ENCODE measurements at regions of chr11 and their contacts with region 1.

Region 1: GRCh38 chr11:35683728-35684339 is 21.3 kb downstream of the TRIM44 start:
- H3K4me3 Mint-ChIP-seq: no peak overlapping the region
- H3K27ac Mint-ChIP-seq: no peak overlapping the region
- H3K4me1 Mint-ChIP-seq: peaks cover 24% of the 10 kb centered on the region
- H3K27me3 Mint-ChIP-seq: no peaks in the 10 kb centered on the region

Region 2: GRCh38 chr11:35629914-35630313 is 53.9 kb before region 1 on chr11:
- intact Hi-C with region 1: no loop called
- H3K4me3 Mint-ChIP-seq: no peak overlapping the region
- H3K27ac Mint-ChIP-seq: no peak overlapping the region
- H3K4me1 Mint-ChIP-seq: no peaks in the 10 kb centered on the region
- H3K27me3 Mint-ChIP-seq: peaks cover 55% of the 10 kb centered on the region

Region 3: DNA sequence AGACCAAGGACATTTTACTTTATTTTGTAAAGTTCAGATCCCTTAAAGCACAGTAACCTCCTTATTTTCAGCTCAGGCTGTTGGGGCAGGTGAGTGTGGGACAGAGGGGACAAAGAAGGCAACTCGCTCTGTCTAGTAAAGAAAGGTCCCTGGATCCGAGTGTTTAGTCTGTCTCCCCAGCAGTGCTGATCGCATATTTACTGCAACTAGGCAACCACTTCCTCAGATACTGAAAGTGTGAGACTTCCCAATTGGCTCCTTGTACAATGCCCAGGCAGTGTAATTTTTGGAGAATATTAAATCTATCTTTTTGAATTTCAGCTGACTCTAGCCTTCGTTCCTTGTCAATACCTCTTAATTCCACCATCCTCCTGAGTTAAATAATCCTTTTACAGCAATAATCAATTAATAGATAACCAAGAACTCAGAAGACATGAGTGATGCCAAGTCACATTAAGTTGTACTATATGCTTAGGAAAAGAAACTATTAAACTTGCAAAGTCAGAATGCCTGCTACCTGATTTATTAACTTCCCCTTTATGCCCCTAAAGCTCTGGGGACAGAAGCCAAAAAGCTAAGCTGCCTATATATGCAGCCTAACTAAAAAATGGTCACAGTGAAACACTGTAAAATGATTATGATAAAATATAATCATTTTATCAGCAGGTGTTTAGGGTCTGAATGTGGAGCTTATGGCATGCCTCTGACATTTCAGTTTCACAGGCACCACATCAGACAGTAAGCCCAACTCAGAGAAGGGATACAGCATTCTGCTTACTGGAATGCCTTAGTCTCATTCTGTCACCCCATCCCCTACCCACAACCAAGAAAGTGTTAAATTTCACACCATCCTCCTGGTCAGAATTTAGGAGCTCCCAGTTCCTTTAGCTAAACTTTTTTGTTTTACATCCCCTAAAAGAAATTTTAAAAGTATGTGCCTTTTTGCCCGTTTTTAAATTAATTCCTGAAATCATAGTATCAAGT is 117.4 kb after region 1 on chr11:
- intact Hi-C with region 1: loop called (anchors 10 kb)
- H3K4me3 Mint-ChIP-seq: peak overlapping the region; percentile 9
- H3K27ac Mint-ChIP-seq: peak overlapping the region; percentile 32
- H3K4me1 Mint-ChIP-seq: peaks cover 27% of the 10 kb centered on the region
- H3K27me3 Mint-ChIP-seq: no peaks in the 10 kb centered on the region